Naive thymus-derived CD4-positive, alpha-beta T cell (primary cell): ENCODE measurements at regions of chr9 and their contacts with region 1.

Region 1: DNA sequence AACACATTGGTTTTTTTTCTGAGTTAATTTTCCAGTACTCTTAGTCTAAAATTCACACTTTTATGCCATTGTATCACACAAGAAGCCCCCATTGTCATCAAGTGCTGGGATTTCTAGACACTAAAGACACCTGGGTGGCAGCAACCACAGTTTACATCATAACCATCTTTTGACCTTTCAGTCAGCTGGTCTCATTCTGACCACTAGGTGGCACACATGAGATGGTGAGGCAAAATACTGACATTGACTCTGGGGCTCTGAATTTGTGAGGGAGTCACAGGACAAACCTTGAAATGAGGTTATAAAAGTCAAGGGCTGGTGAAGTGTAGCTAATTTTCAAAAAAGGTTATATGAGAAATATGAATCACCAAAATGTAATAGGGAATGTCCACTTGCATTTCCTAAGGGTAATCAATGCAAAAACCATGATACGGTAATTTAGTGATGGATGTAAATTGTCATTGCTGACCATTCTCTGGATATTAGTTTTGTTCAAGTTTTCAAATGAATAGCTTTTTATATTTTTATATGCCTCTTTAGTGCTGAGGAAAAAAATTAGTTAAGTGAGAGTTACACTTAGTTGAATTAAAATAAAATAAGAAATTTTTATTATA is 229.4 kb downstream of the DMAC1 start:
- DNase-seq: peak; percentile 18 to 76 (median 63)
- ATAC-seq: peak; percentile 84
- H3K4me3 ChIP-seq: no peak overlapping the region
- H3K4me3 Mint-ChIP-seq: no peak overlapping the region
- H3K27ac ChIP-seq: no peak overlapping the region
- H3K27ac Mint-ChIP-seq: peak overlapping the region in 1 of 9 donors; percentile 26
- H3K4me1 ChIP-seq: no peaks in the 10 kb centered on the region
- H3K4me1 Mint-ChIP-seq: peaks cover 0 to 5% (median 0%) of the 10 kb centered on the region in 7 donors
- H3K27me3 ChIP-seq: no peaks in the 10 kb centered on the region
- H3K27me3 Mint-ChIP-seq: peaks cover 0 to 28% (median 3%) of the 10 kb centered on the region in 5 donors

Region 2: DNA sequence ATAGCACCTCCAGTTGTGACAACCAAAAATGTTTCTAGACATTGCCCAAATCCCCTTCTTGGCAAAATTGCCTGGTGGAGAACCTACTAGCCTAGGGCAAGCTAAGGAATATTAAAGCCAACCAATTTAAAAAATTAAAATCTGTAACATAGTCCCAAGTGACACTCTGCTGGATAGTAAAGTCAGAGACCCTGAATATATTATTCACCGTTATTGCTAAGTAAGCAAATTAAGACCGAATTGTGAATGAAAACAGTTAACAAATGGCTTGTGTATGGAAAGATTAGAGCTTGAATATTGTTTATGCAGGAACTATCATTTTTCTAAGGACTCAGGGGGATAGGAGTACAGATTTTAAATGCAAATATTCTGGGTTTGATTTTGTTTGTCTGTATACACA is 21.3 kb after region 1 on chr9:
- CTCF ChIA-PET with region 1: no interaction called
- POLR2A ChIA-PET with region 1: no interaction called
- intact Hi-C with region 1: loop called in 1 of 2 experiments (anchors 2 kb)
- DNase-seq: no peak
- ATAC-seq: no peak
- H3K4me3 ChIP-seq: no peak overlapping the region
- H3K4me3 Mint-ChIP-seq: no peak overlapping the region
- H3K27ac ChIP-seq: no peak overlapping the region
- H3K27ac Mint-ChIP-seq: no peak overlapping the region
- H3K4me1 ChIP-seq: no peaks in the 10 kb centered on the region
- H3K4me1 Mint-ChIP-seq: no peaks in the 10 kb centered on the region
- H3K27me3 ChIP-seq: no peaks in the 10 kb centered on the region
- H3K27me3 Mint-ChIP-seq: peaks cover 0 to 17% (median 0%) of the 10 kb centered on the region in 5 donors

Region 3: DNA sequence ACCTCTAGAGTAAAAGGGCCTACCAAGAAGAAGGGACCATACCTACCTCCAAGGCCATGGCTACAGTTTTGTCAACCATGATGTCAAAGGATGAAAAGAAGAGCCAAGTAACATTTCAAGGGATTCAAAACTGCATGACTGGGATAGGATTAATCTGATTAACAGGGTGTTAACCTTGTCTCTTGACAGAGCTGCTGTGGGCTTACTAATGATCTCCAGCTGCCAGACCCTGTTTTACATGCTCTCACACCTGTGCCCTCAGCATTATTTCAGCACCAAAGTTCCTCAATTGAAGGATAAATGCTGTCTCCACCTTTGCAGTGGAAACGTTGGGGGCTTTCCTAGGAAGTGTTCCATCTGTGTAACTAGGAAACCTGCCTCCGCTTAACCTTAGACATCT is 151.1 kb after region 1 on chr9:
- CTCF ChIA-PET with region 1: interaction called, 3 read pairs
- POLR2A ChIA-PET with region 1: no interaction called
- intact Hi-C with region 1: loop called in 1 of 2 experiments (anchors 5 kb)
- DNase-seq: no peak
- ATAC-seq: no peak
- H3K4me3 ChIP-seq: no peak overlapping the region
- H3K4me3 Mint-ChIP-seq: no peak overlapping the region
- H3K27ac ChIP-seq: no peak overlapping the region
- H3K27ac Mint-ChIP-seq: no peak overlapping the region
- H3K4me1 ChIP-seq: no peaks in the 10 kb centered on the region
- H3K4me1 Mint-ChIP-seq: no peaks in the 10 kb centered on the region
- H3K27me3 ChIP-seq: no peaks in the 10 kb centered on the region
- H3K27me3 Mint-ChIP-seq: no peaks in the 10 kb centered on the region

Region 4: DNA sequence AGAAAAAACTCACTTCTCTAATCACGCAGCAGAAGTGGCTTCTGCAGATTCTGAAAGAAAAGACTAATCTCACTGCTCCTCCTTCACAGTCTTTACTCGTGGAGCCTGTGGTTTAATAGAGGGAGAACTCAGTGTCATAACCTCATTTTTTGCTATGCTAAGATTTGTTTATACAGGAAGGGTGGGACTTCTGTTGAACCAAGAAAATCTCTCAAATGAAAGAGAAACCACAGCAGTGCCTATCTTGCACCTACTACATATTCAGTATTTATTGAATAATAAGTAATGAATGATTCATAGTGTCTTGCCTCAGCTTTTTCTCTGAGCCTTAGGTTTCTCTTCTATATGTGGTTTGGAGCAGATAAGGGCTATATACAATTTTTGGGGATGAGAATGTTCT is 365.5 kb after region 1 on chr9:
- CTCF ChIA-PET with region 1: no interaction called
- POLR2A ChIA-PET with region 1: no interaction called
- intact Hi-C with region 1: loop called in 1 of 2 experiments (anchors 1 kb)
- DNase-seq: peak in 7 of 9 donors; percentile 54 to 83 (median 74)
- ATAC-seq: peak; percentile 97
- H3K4me3 ChIP-seq: peak overlapping the region; percentile 41
- H3K4me3 Mint-ChIP-seq: peak overlapping the region; percentile 63 to 85 (median 78)
- H3K27ac ChIP-seq: peak overlapping the region; percentile 58
- H3K27ac Mint-ChIP-seq: peak overlapping the region; percentile 90 to 99 (median 96)
- H3K4me1 ChIP-seq: peaks cover 19 to 29% of the 10 kb centered on the region in 2 donors
- H3K4me1 Mint-ChIP-seq: peaks cover 9 to 45% (median 35%) of the 10 kb centered on the region in 7 donors
- H3K27me3 ChIP-seq: no peaks in the 10 kb centered on the region
- H3K27me3 Mint-ChIP-seq: no peaks in the 10 kb centered on the region

Region 5: GRCh38 chr9:8115570-8115969 is 545.4 kb after region 1 on chr9:
- CTCF ChIA-PET with region 1: no interaction called
- POLR2A ChIA-PET with region 1: no interaction called
- intact Hi-C with region 1: loop called in 1 of 2 experiments (anchors 5 kb)
- DNase-seq: no peak
- ATAC-seq: no peak
- H3K4me3 ChIP-seq: no peak overlapping the region
- H3K4me3 Mint-ChIP-seq: no peak overlapping the region
- H3K27ac ChIP-seq: no peak overlapping the region
- H3K27ac Mint-ChIP-seq: no peak overlapping the region
- H3K4me1 ChIP-seq: no peaks in the 10 kb centered on the region
- H3K4me1 Mint-ChIP-seq: peaks cover 0 to 9% (median 0%) of the 10 kb centered on the region in 7 donors
- H3K27me3 ChIP-seq: no peaks in the 10 kb centered on the region
- H3K27me3 Mint-ChIP-seq: no peaks in the 10 kb centered on the region

Region 6: DNA sequence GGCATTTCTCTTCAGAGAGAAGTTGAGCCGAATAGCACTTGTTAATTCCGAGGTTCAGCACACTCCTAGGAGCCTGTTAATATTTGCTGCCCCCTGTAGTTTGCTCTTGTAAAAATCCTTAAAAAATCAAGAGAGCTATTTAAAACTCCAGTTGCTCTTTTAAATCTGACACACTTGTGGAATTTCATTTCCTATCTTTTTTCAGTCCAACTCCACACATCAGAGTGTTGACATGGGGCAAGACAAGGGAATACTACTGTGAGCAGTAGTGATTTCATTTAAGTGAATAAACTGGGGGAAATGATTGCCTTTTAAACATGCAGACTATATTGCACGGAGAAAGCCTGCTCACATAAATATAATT is 1325.6 kb after region 1 on chr9:
- CTCF ChIA-PET with region 1: no interaction called
- POLR2A ChIA-PET with region 1: no interaction called
- intact Hi-C with region 1: loop called (anchors 1 to 2 kb)
- DNase-seq: peak in 4 of 9 donors; percentile 1 to 7 (median 3)
- ATAC-seq: no peak
- H3K4me3 ChIP-seq: no peak overlapping the region
- H3K4me3 Mint-ChIP-seq: no peak overlapping the region
- H3K27ac ChIP-seq: no peak overlapping the region
- H3K27ac Mint-ChIP-seq: no peak overlapping the region
- H3K4me1 ChIP-seq: no peaks in the 10 kb centered on the region
- H3K4me1 Mint-ChIP-seq: no peaks in the 10 kb centered on the region
- H3K27me3 ChIP-seq: no peaks in the 10 kb centered on the region
- H3K27me3 Mint-ChIP-seq: peaks cover 0 to 7% (median 3%) of the 10 kb centered on the region in 5 donors